ENCODE measurements at regions of chr2 and their contacts with region 1.

Region 1: GRCh38 chr2:36663851-36664695 is 32.4 kb upstream of the VIT start:
- DNase-seq: peak; percentile 88
- H3K4me3 ChIP-seq: no peak overlapping the region
- H3K27ac ChIP-seq: no peak overlapping the region
- H3K4me1 ChIP-seq: no peaks in the 10 kb centered on the region
- H3K27me3 ChIP-seq: no peaks in the 10 kb centered on the region
- CTCF ChIP-seq: peak; percentile 87

Region 2: GRCh38 chr2:36507408-36507812 is 156.7 kb before region 1 on chr2:
- CTCF ChIA-PET with region 1: no interaction called
- POLR2A ChIA-PET with region 1: no interaction called
- intact Hi-C with region 1: loop called (anchors 5 kb)
- DNase-seq: peak; percentile 84
- H3K4me3 ChIP-seq: no peak overlapping the region
- H3K27ac ChIP-seq: no peak overlapping the region
- H3K4me1 ChIP-seq: no peaks in the 10 kb centered on the region
- H3K27me3 ChIP-seq: no peaks in the 10 kb centered on the region
- CTCF ChIP-seq: peak; percentile 91

Region 3: DNA sequence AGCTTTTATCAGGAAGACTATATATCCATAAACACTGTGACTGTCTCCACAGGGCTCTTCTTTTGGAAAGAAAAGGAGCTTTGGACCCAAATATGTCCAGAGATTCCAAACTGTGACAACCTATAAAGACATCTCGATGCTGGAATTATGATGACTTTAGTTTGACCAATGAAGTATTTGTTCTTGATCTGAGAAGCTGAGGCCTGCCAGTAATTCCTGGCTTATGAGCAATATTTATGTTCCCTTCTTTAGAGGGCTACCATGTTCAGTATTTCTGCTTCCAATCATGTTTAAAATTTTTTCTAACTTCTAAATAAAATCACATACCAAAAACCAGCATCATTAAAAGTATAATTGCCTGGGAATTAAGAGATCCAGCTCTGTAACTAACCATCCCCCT is 107.2 kb before region 1 on chr2:
- CTCF ChIA-PET with region 1: no interaction called
- POLR2A ChIA-PET with region 1: no interaction called
- intact Hi-C with region 1: loop called (anchors 10 kb)
- DNase-seq: no peak
- H3K4me3 ChIP-seq: no peak overlapping the region
- H3K27ac ChIP-seq: no peak overlapping the region
- H3K4me1 ChIP-seq: peaks cover 24% of the 10 kb centered on the region
- H3K27me3 ChIP-seq: no peaks in the 10 kb centered on the region
- CTCF ChIP-seq: no peak

Measured in A673 (cell line).